ENCODE measurements at regions of chr14 and their contacts with region 1.

Region 1: DNA sequence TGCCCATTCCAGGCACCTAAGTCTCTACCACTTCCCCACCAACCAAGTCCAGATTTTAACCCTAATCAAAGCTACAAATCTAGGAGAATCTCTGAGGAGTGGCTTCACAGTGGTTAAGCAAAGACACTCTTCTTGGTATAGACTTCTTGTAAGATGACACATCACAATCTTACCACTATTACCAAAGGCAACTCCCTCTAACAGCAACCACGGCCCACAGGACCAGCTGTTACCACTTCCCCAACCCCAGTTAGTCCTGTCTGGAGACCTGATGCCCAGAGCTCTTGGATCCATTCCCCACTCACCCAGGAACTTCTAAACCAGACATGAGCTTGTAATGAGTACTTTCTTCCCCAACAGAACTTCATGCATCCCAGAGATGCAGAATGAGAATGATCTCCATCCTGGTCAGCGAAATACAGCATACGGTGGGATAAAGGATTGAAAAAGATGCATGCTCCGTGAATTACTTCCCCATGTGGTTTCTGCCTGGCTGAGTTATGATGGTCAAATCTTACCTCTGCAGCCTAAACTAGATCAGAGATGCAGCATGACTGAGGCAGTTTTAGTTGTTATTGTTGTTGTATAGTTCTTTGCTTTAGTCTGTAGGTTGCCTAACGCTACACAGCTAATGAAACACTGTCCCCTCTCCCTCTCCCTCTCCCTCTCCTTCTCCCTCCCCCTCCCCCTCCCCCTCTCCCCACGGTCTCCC is 87.7 kb upstream of the FOXN3 start:
- DNase-seq: peak; percentile 7
- H3K4me3 Mint-ChIP-seq: no peak overlapping the region
- H3K27ac Mint-ChIP-seq: peak overlapping the region; percentile 32
- H3K4me1 Mint-ChIP-seq: peaks cover 51% of the 10 kb centered on the region
- H3K27me3 Mint-ChIP-seq: no peaks in the 10 kb centered on the region

Region 2: DNA sequence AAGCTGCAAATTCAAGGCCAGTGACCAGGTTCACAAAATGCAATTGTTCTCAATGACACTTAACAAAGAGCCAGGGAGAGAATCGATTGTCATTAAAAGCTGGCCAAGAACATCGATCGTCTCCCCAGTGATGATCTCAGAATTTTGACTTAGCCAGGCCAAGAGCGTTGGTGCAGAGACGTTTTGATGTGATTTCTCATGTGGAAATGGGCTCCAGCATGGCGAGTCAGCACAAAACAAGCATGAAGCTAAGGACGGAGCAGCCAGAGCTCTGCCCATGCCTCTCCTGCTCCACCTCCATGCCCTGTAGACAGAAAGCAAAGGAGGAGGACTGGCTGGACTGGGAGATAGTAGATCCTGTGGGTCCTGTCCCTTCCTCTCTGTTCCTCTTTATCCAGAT is 358.5 kb before region 1 on chr14:
- intact Hi-C with region 1: no loop called
- DNase-seq: no peak
- H3K4me3 Mint-ChIP-seq: no peak overlapping the region
- H3K27ac Mint-ChIP-seq: no peak overlapping the region
- H3K4me1 Mint-ChIP-seq: no peaks in the 10 kb centered on the region
- H3K27me3 Mint-ChIP-seq: peaks cover 8% of the 10 kb centered on the region

Region 3: GRCh38 chr14:89445273-89445973 is 59.3 kb before region 1 on chr14:
- intact Hi-C with region 1: loop called (anchors 1 kb)
- DNase-seq: peak; percentile 11
- H3K4me3 Mint-ChIP-seq: peak overlapping the region; percentile 37
- H3K27ac Mint-ChIP-seq: peak overlapping the region; percentile 83
- H3K4me1 Mint-ChIP-seq: peaks cover 54% of the 10 kb centered on the region
- H3K27me3 Mint-ChIP-seq: no peaks in the 10 kb centered on the region

Region 4: DNA sequence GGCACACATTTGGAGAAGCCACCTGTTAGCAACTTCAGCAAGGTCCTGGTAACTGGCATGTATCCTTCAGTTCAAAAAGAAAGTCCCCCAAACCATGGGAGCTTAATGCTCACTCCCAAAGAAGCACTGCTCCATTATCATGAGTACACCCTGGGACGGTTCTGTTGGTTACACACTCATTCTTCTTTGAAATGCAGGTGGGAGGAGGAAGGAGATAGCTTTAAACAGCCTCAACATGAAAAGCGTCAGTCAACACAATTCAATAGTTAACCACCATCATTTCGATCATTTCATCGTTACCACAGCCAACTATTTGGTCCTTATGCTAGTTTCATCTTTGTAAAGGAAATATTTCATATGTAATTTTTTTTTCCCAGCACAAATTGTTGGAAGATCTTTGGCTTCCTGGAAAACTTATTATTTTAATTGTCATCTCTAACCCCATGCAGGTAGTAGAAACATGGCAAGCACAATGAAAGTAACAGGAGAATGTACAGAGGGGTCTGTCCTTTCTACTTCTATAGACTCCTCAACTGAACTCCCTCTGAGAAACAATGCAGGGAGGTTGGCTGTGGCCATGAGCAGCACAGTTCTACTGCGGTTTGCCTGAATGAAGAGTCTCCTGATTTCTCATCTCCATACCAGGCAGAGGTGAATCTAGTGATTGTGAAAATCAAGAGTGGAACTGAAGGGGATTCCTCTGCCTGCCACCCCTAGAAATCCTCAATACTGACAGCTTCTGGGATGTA is 108.7 kb after region 1 on chr14:
- intact Hi-C with region 1: loop called (anchors 1 kb)
- DNase-seq: no peak
- H3K4me3 Mint-ChIP-seq: peak overlapping the region; percentile 69
- H3K27ac Mint-ChIP-seq: peak overlapping the region; percentile 79
- H3K4me1 Mint-ChIP-seq: peaks cover 75% of the 10 kb centered on the region
- H3K27me3 Mint-ChIP-seq: no peaks in the 10 kb centered on the region

Region 5: GRCh38 chr14:89701211-89702043 is 196.7 kb after region 1 on chr14:
- intact Hi-C with region 1: loop called (anchors 2 kb)
- DNase-seq: peak; percentile 78
- H3K4me3 Mint-ChIP-seq: peak overlapping the region; percentile 70
- H3K27ac Mint-ChIP-seq: peak overlapping the region; percentile 84
- H3K4me1 Mint-ChIP-seq: peaks cover 51% of the 10 kb centered on the region
- H3K27me3 Mint-ChIP-seq: peaks cover 4% of the 10 kb centered on the region

Region 6: GRCh38 chr14:89720741-89721315 is 216.1 kb after region 1 on chr14:
- intact Hi-C with region 1: loop called (anchors 5 kb)
- DNase-seq: peak; percentile 59
- H3K4me3 Mint-ChIP-seq: peak overlapping the region; percentile 49
- H3K27ac Mint-ChIP-seq: peak overlapping the region; percentile 86
- H3K4me1 Mint-ChIP-seq: peaks cover 64% of the 10 kb centered on the region
- H3K27me3 Mint-ChIP-seq: no peaks in the 10 kb centered on the region